Gastrocnemius medialis (tissue), 4 donors: ENCODE measurements at regions of chr20 and their contacts with region 1.

Region 1: DNA sequence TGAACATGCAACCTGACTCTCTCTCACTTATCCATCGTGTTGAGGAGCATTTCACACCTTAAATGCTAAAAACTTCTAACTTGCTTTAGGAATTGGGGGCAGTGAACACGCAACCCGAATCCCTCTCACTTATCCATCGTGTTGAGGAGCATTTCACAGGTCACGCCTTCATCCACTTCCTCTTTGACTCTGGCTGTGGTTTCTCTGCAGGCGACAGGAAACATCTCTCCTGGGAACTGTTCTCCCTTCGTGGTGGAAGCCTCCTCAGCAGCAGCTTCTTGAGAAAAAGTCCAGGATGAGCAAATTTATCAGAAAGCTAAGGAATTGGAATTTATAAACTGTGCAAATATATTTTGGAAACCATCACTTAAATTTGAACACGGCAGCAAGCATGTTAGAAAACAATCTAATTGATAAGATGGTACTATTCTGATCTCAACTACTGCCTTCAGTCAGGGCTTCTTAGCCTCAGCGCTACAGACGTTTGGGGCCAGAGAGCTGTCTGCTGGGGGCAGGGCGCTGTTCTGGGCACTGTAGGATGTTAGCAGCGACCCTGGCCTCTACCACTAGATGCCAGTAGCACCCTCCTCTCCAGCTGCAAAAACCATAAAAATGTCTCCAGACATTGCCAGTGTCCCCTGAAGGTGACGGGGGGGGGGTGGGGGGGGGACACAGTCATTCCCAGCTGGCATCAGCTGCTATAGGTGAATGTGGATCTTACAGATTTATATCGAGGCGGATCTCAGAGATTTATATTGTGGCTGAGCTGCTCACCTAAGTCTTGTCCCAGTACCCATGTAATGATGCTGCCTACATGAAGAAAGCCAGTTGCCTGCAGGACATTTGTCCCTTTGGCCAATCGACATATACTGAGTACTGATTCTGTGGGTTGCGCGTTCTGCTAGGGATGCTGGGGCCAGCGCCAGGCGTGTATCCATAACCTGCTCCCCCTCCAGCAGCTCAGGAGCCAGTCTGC is 26.2 kb downstream of the CTCFL start:
- DNase-seq: no peak
- ATAC-seq: no peak
- H3K4me3 ChIP-seq: no peak overlapping the region
- H3K27ac ChIP-seq: no peak overlapping the region
- H3K4me1 ChIP-seq: peaks cover 9 to 10% of the 10 kb centered on the region in 2 donors
- H3K27me3 ChIP-seq: no peaks in the 10 kb centered on the region
- CTCF ChIP-seq: no peak
- POLR2A ChIP-seq: no peak

Region 2: DNA sequence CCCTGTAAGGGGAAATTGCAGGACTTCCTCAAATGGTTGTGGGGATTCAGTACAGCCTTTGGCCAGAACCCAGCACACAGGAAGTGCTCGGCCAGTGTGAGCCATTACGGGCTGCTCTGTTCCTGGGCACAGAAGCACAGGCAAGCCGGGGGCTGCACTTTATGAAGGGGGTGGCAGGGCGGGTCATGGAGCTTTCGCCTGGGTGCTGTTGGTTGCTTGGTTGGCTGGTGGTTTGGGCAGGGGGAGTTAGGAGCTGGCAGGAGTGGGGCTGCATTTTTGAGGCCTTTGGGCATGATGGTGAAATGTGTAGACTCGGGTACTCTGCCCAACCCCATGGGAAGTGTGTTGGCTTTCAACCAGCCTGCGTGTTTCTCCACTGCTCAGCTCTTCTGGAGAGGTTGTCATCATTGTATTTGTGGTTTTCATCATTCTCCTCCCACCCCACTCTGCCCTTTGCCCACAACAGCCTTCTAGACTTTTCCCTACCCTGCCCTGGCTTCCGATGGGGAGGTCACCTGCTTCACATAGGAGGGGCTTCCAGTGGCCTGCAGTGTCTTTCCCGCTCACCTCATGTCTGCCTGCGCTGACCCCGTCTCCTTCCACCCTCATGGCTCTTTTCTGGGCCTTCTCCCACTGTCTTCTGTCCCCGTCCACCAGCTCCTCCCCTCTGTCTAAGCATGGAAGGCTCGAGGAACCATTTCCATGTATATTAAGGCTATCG is 123.6 kb before region 1 on chr20:
- in situ Hi-C with region 1: loop called in 1 of 4 experiments (anchors 5 kb)
- intact Hi-C with region 1: no loop called
- DNase-seq: no peak
- ATAC-seq: peak; percentile 23 to 27
- H3K4me3 ChIP-seq: no peak overlapping the region
- H3K27ac ChIP-seq: peak overlapping the region in 1 of 4 donors; percentile 25
- H3K4me1 ChIP-seq: no peaks in the 10 kb centered on the region
- H3K27me3 ChIP-seq: no peaks in the 10 kb centered on the region
- CTCF ChIP-seq: no peak
- POLR2A ChIP-seq: no peak

Region 3: DNA sequence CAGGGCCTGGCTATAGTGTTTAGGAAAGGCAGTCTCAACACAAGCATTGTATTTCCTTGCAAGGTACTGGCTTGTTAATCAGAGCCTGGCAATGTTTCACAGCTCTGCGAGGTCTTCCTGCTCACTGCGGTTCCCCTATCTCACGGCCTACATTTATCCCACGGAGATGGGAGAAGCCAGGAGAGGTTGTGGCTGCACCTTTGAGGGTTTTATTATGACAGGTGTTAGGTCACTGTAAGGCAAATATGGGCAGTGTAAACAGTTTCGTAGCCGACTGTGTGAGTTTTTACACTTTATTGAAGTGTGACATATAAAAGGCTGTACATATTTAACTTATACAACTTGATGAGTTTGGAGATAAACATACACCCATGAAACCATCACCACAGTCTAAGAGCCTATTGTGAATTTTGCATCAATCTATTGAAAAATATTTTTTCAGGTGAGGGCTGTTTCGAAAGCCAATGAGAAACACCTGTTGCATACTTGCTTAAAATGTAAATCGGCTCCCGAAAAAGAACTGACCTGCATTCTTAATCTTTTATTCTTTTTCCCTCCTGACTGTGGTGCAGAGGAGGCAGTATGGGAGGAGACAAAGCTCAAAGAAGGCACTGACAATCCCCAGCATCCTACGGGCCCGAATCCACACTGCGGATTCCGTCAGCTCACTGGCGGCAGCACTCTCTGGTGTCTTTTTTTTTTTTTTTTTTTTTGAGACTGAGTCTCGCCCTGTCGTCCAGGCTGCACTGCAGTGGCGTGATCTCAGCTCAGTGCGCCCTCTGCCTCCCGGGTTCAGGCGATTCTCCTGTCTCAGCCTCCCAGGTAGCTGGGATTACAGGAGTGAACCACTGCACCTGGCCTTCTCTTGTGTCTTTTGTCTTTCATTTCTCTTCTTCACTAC is 115.0 kb before region 1 on chr20:
- in situ Hi-C with region 1: loop called (anchors 5 kb)
- intact Hi-C with region 1: loop called (anchors 1 kb)
- DNase-seq: no peak
- ATAC-seq: no peak
- H3K4me3 ChIP-seq: no peak overlapping the region
- H3K27ac ChIP-seq: no peak overlapping the region
- H3K4me1 ChIP-seq: no peaks in the 10 kb centered on the region
- H3K27me3 ChIP-seq: no peaks in the 10 kb centered on the region
- CTCF ChIP-seq: no peak
- POLR2A ChIP-seq: no peak

Region 4: GRCh38 chr20:57708694-57709656 is 210.3 kb after region 1 on chr20:
- in situ Hi-C with region 1: no loop called
- intact Hi-C with region 1: no loop called
- DNase-seq: peak in 1 of 2 donors; percentile 59
- ATAC-seq: peak; percentile 8 to 10
- H3K4me3 ChIP-seq: peak overlapping the region; percentile 62 to 82 (median 66)
- H3K27ac ChIP-seq: peak overlapping the region; percentile 78 to 88 (median 82)
- H3K4me1 ChIP-seq: peaks cover 42 to 44% of the 10 kb centered on the region in 2 donors
- H3K27me3 ChIP-seq: no peaks in the 10 kb centered on the region
- CTCF ChIP-seq: no peak
- POLR2A ChIP-seq: peak; percentile 51 to 56